ENCODE measurements at regions of chr12 and their contacts with region 1.

Region 1: DNA sequence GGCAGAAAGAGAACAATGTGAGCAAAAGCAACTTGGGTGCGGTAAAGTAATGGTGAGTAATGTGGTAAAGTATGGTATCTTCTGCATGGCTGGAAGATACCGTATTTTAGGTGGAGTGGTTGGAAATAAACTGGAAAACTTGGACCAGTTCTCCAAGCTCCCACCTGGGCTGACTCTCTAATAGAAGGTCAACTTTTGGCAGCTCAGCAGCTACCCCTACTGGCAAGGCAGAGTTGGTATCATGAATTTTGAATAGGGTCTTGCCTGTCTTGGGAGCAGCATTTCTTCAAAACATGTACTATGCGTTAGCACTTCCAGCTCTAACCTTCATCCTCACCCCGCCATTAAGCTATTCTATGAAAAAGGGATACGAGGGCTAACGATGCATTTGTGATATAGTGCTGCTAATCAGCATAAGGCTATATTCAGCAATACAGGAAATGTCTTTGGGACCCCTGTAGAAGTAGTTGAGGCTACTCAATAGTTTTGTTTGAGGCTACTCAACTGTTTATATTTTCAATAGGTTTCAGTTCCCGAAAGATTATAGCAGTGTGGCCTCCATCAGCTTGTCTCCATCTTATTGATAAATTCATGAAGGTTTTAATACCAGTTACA is 276.3 kb upstream of the FAR2 start:
- DNase-seq: peak; percentile 100
- ATAC-seq: peak; percentile 37
- H3K4me3 ChIP-seq: no peak overlapping the region
- H3K27ac ChIP-seq: peak overlapping the region; percentile 78
- H3K4me1 ChIP-seq: peaks cover 48% of the 10 kb centered on the region
- H3K27me3 ChIP-seq: no peaks in the 10 kb centered on the region
- CTCF ChIP-seq: no peak

Region 2: GRCh38 chr12:27984275-27984674 is 888.5 kb before region 1 on chr12:
- CTCF ChIA-PET with region 1: interaction called, 4 read pairs
- POLR2A ChIA-PET with region 1: no interaction called
- intact Hi-C with region 1: loop called (anchors 1 kb)
- DNase-seq: peak; percentile 100
- ATAC-seq: peak; percentile 54
- H3K4me3 ChIP-seq: peak overlapping the region; percentile 6
- H3K27ac ChIP-seq: peak overlapping the region; percentile 73
- H3K4me1 ChIP-seq: peaks cover 47% of the 10 kb centered on the region
- H3K27me3 ChIP-seq: no peaks in the 10 kb centered on the region
- CTCF ChIP-seq: no peak

Region 3: GRCh38 chr12:28172434-28173030 is 700.2 kb before region 1 on chr12:
- CTCF ChIA-PET with region 1: no interaction called
- POLR2A ChIA-PET with region 1: no interaction called
- intact Hi-C with region 1: loop called (anchors 5 kb)
- DNase-seq: peak; percentile 90
- ATAC-seq: peak; percentile 98
- H3K4me3 ChIP-seq: no peak overlapping the region
- H3K27ac ChIP-seq: no peak overlapping the region
- H3K4me1 ChIP-seq: peaks cover 6% of the 10 kb centered on the region; the same call in 1 of the 2 replicates
- H3K27me3 ChIP-seq: no peaks in the 10 kb centered on the region
- CTCF ChIP-seq: peak; percentile 95

Region 4: GRCh38 chr12:28497889-28498411 is 374.8 kb before region 1 on chr12:
- CTCF ChIA-PET with region 1: no interaction called
- POLR2A ChIA-PET with region 1: no interaction called
- intact Hi-C with region 1: loop called (anchors 2 kb)
- DNase-seq: peak; percentile 93
- ATAC-seq: peak; percentile 95
- H3K4me3 ChIP-seq: no peak overlapping the region; the same call in 1 of the 2 replicates
- H3K27ac ChIP-seq: peak overlapping the region; percentile 63
- H3K4me1 ChIP-seq: peaks cover 26% of the 10 kb centered on the region
- H3K27me3 ChIP-seq: no peaks in the 10 kb centered on the region
- CTCF ChIP-seq: no peak

Region 5: DNA sequence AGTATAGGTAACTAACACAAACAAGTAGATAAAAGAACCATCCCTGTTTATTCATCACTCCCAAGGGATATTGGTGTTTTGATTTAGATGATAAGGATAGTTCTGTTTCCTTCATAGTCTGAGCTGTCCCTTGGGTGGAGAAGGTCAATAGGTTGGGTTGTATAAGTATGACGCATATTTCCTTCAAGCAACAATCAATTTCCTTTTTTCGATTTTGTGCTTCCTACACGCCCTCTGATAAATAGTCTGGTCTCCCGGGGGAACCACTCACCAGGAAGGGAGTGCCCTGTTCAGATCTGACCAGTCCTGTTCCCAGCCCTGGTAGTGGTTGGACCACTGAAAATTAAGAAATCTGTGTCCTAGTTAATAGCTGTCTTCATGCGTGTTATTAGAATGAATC is 102.4 kb before region 1 on chr12:
- CTCF ChIA-PET with region 1: no interaction called
- POLR2A ChIA-PET with region 1: no interaction called
- intact Hi-C with region 1: loop called (anchors 2 kb)
- DNase-seq: peak; percentile 97
- ATAC-seq: peak; percentile 92
- H3K4me3 ChIP-seq: no peak overlapping the region
- H3K27ac ChIP-seq: peak overlapping the region; percentile 69
- H3K4me1 ChIP-seq: peaks cover 15% of the 10 kb centered on the region
- H3K27me3 ChIP-seq: no peaks in the 10 kb centered on the region
- CTCF ChIP-seq: no peak

Region 6: GRCh38 chr12:28998637-28999120 is 125.9 kb after region 1 on chr12:
- CTCF ChIA-PET with region 1: interaction called, 3 read pairs
- POLR2A ChIA-PET with region 1: no interaction called
- intact Hi-C with region 1: loop called (anchors 1 kb)
- DNase-seq: peak; percentile 92
- ATAC-seq: peak; percentile 86
- H3K4me3 ChIP-seq: no peak overlapping the region
- H3K27ac ChIP-seq: no peak overlapping the region
- H3K4me1 ChIP-seq: no peaks in the 10 kb centered on the region
- H3K27me3 ChIP-seq: no peaks in the 10 kb centered on the region
- CTCF ChIP-seq: peak; percentile 100